Activated CD4-positive, alpha-beta memory T cell treated with anti-CD3 and anti-CD28 coated beads for 36 hours (primary cell): ENCODE measurements at regions of chr17 and their contacts with region 1.

Region 1: DNA sequence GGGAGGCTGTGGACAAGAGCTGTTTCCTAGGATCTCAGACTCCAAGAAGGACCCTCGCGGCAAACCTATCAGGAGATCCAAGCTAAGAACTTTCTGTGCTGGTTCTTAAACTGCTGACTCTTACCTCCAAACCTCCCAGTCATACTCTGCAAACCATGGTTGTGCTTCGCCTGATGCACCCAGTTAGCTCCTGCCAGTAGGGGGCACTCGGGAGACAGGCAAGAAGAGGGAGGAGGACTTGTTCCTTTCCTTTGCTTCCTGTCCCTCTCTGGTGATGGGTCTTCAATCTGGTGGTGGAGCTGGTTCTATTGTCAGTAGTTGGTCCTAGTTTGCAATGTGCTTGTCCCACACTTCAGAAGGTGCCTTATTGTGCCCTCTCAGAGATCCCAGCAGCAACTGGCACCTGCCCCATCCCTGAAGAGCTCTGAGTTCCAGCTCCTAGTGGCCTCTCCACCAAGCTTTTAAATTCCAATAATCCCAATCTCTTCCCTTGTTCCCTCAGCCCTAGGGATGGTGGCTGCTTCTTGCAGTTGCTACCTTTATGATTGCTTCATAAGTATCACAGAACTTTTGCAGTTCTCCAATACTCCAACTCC is 113.5 kb upstream of the RPL38 start:
- DNase-seq: peak; percentile 76
- H3K4me3 Mint-ChIP-seq: no peak overlapping the region
- H3K27ac Mint-ChIP-seq: no peak overlapping the region
- H3K4me1 Mint-ChIP-seq: no peaks in the 10 kb centered on the region
- H3K27me3 Mint-ChIP-seq: peaks cover 1% of the 10 kb centered on the region

Region 2: DNA sequence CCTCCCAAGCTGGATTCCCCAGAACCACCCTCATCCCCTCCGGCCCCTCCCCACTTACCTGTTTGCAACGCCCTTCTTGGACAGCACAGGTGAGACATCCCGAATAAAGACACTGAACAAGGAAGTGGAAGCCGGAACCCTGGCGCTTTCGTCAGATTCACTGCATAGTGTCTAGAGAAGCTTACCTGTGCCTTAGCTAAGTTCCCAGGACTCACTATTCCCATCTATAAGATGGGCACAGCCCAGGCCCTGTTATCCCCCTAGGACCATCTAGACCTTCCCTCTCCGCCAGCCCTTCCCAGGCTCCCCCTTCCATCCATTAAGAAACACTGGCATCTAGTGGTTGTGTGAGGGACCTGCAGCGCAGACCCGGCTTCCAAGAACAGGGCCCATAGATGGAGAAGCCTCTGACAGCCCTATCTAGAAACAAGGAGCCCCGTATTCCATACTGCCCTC is 86.6 kb after region 1 on chr17:
- CTCF ChIA-PET with region 1: interaction called, 4 read pairs
- POLR2A ChIA-PET with region 1: no interaction called
- intact Hi-C with region 1: loop called (anchors 10 kb)
- DNase-seq: peak; percentile 66
- H3K4me3 Mint-ChIP-seq: no peak overlapping the region
- H3K27ac Mint-ChIP-seq: no peak overlapping the region
- H3K4me1 Mint-ChIP-seq: no peaks in the 10 kb centered on the region
- H3K27me3 Mint-ChIP-seq: peaks cover 31% of the 10 kb centered on the region